HepG2 (cell line): ENCODE measurements at regions of chr2 and their contacts with region 1.

Region 1: DNA sequence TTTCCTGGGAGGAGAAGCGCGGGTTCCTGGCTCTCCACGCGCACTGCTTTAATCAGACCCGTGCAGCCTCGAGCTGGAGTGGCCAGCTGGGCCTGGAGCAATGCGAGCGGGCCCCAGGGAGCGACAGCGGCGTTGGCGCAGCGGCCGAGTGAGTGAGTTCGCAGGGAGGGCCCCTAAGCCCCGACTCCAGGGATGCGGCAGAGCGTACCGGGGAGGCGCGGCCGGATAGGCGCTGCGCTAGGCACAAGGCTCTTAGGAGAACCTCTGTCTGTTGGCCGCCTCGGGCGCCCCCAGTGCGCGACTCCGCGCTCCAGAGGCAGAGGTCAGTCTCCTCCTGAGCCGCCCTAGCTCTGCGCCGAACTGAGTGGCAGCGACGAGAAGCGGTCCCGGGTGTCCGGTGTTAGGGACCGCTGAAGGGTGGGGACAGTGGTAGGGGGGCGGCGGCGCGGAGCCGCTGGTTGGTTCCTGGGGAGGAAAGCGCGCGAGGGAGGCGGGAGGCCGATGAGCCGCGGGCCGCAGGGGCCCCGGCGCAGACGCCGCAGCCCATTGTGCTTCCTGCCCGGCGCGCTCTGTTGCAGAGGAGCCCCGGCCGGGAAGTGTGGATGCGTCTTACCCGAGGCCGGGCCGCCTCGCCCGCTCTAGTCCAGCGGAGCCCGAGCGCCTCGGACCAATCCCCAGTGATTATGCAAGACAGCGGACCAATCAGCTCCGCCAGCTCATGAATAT is 410 bp upstream of the DLX1 start:
- DNase-seq: peak; percentile 92
- ATAC-seq: peak; percentile 87
- H3K4me3 ChIP-seq: peak overlapping the region; percentile 60 to 82 (median 64)
- H3K27ac ChIP-seq: no peak overlapping the region
- H3K4me1 ChIP-seq: peaks cover 84% of the 10 kb centered on the region
- H3K27me3 ChIP-seq: peaks cover 13 to 83% of the 10 kb centered on the region in 2 experiments; a peak in 4 of 5 replicates
- CTCF ChIP-seq: peak; percentile 35
- EP300 ChIP-seq: 0 out of 4 replicates have a peak, but pooled peaks of 1 of the 2 experiments have one; percentile 27
- POLR2A ChIP-seq: peak in 1 of 2 experiments; percentile 59; a peak in 1 of 4 replicates
- RAD21 ChIP-seq: no peak; the same call in 1 of the 2 replicates

Region 2: DNA sequence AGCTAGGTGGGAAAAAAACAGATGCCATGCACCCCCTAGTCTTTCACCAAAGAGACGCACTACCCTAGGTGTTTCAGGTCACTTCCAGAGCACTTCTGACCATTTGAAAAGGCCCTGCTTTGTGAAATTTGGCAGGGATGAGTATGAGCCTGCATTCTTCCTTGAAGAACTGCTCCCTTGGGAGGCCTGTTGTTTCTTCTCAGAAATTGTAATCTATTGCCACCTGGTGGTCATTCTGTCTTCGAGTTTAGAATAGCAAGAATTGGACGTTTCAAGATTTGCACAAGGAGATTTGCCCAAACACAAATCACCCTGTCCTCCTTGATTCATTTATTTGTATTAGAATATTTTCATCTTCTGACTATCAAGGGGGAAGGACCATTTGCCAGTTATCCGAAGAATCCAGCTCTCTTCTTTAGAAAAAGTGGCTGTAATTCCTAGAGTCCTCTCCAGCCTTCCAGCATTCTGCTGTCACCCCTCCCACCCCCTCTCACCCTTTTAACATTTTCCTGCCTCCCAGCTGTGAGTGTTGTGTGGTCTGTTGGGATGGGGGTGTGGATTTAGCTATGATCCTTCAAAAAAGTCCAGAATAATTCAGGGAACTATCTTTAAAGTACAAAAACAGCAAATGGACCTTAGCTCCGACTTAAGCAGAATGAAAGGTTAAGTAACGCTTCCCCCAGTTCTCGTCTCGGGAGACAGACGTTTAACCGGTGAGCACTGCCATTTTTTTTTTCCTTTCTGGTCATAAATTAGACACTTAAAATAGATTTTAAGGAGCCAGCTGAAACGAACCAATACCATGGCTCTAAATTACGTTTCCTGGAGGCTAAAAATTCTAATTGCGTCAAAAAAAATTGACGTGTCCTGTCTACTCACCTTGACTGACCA is 1271.9 kb before region 1 on chr2:
- CTCF ChIA-PET with region 1: no interaction called
- POLR2A ChIA-PET with region 1: no interaction called
- in situ Hi-C with region 1: no loop called
- intact Hi-C with region 1: no loop called
- DNase-seq: peak; percentile 82
- ATAC-seq: no peak
- H3K4me3 ChIP-seq: no peak overlapping the region
- H3K27ac ChIP-seq: no peak overlapping the region
- H3K4me1 ChIP-seq: peaks cover 27% of the 10 kb centered on the region
- H3K27me3 ChIP-seq: peaks cover 16 to 53% of the 10 kb centered on the region in 2 experiments
- CTCF ChIP-seq: peak; percentile 85
- EP300 ChIP-seq: no peak
- POLR2A ChIP-seq: no peak
- RAD21 ChIP-seq: peak; percentile 89

Region 3: DNA sequence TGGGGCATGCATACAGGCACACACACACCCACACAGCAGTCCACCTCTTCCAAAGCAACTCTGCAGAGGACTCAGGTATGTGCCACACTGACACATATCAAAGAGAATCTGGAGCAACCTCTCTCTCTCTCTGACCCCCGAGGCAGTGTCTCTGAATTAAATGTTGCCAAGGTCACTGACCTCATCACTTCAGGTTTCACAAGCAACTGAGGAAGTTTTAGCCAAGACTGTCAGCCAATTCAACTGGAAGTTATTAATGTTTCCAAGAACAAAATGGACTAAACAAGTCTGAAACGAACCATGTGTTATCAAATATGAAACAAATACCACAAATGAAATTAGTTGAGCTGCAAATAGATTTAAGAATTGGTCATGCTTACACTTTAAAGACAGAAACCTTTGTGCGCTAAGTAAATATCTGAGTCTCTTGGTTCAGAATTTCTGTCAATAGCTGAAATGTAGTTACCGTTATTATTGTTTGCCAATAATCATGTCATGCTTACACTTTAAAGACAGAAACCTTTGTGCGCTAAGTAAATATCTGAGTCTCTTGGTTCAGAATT is 277.0 kb before region 1 on chr2:
- CTCF ChIA-PET with region 1: no interaction called
- POLR2A ChIA-PET with region 1: no interaction called
- in situ Hi-C with region 1: no loop called
- intact Hi-C with region 1: no loop called
- DNase-seq: peak; percentile 91
- ATAC-seq: peak; percentile 97
- H3K4me3 ChIP-seq: no peak overlapping the region
- H3K27ac ChIP-seq: peak overlapping the region; percentile 72
- H3K4me1 ChIP-seq: peaks cover 26% of the 10 kb centered on the region
- H3K27me3 ChIP-seq: no peaks in the 10 kb centered on the region
- CTCF ChIP-seq: no peak
- EP300 ChIP-seq: peak in 1 of 2 experiments; percentile 68; a peak in 2 of 4 replicates
- POLR2A ChIP-seq: no peak
- RAD21 ChIP-seq: no peak

Region 4: GRCh38 chr2:172031536-172031935 is 53.4 kb before region 1 on chr2:
- CTCF ChIA-PET with region 1: no interaction called
- POLR2A ChIA-PET with region 1: no interaction called
- in situ Hi-C with region 1: no loop called
- intact Hi-C with region 1: loop called (anchors 2 kb)
- DNase-seq: no peak
- ATAC-seq: no peak
- H3K4me3 ChIP-seq: no peak overlapping the region
- H3K27ac ChIP-seq: no peak overlapping the region
- H3K4me1 ChIP-seq: peaks cover 30% of the 10 kb centered on the region
- H3K27me3 ChIP-seq: no peaks in the 10 kb centered on the region
- CTCF ChIP-seq: no peak
- EP300 ChIP-seq: no peak
- POLR2A ChIP-seq: no peak
- RAD21 ChIP-seq: no peak

Region 5: GRCh38 chr2:172052000-172052983 is 32.6 kb before region 1 on chr2:
- CTCF ChIA-PET with region 1: no interaction called
- POLR2A ChIA-PET with region 1: interaction called, 16 read pairs
- in situ Hi-C with region 1: no loop called
- intact Hi-C with region 1: loop called (anchors 5 kb)
- DNase-seq: peak; percentile 98
- ATAC-seq: peak; percentile 98
- H3K4me3 ChIP-seq: peak overlapping the region; percentile 5 to 32 (median 28); a peak in 4 of 6 replicates
- H3K27ac ChIP-seq: peak overlapping the region; percentile 60
- H3K4me1 ChIP-seq: peaks cover 63% of the 10 kb centered on the region
- H3K27me3 ChIP-seq: no peaks in the 10 kb centered on the region
- CTCF ChIP-seq: no peak
- EP300 ChIP-seq: peak; percentile 86 to 96; a peak in 3 of 4 replicates
- POLR2A ChIP-seq: no peak
- RAD21 ChIP-seq: peak; percentile 55

Region 6: DNA sequence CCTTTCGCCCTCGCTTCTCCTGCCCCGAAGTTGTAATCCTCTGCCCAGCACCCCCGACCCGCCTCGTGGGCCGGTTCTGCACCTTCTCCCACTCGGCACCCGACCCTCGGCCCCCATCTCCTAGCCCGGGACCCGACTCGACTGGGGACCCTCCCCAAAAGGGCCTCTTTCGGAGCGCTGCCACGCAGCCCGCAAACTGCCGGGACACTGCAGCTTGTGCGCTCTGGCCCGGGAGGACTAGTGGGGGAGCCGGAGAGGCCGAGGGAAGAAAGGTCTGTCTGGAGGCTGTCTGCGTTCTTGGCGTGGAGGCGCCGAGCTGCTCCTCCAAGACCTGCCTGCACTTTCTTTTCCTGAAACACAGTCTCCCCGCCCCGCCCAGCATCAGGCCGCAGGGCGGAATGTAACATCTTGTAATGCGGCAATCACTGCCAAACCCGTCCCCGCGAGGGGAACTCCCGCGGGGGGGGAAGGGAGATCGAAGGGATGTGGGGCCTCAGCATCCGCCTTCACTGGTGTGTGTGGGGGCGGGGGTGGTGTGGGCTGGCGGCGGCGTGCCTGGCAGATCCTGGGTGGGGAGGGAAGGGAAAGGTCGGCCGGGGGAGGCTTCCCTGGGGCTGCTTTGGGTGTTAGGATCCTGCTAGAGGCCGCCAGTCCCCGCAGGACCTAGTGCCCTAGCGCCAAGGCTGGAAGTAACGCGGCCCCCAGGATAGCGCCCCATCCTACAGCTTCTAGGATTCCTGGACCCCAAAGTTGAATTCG is 10.4 kb after region 1 on chr2:
- CTCF ChIA-PET with region 1: no interaction called
- POLR2A ChIA-PET with region 1: interaction called, 16 read pairs
- in situ Hi-C with region 1: no loop called
- intact Hi-C with region 1: loop called (anchors 1 kb)
- DNase-seq: no peak
- ATAC-seq: peak; percentile 51
- H3K4me3 ChIP-seq: peak overlapping the region; percentile 60 to 77 (median 61)
- H3K27ac ChIP-seq: no peak overlapping the region
- H3K4me1 ChIP-seq: peaks cover 50% of the 10 kb centered on the region
- H3K27me3 ChIP-seq: peaks cover 23 to 85% of the 10 kb centered on the region in 2 experiments
- CTCF ChIP-seq: no peak
- EP300 ChIP-seq: no peak
- POLR2A ChIP-seq: no peak
- RAD21 ChIP-seq: no peak